ENCODE measurements at regions of chr15 and their contacts with region 1.

Region 1: GRCh38 chr15:57611938-57612337 is 20.2 kb downstream of the MYZAP start:
- DNase-seq: peak; percentile 55 to 83 (median 79)
- H3K4me3 ChIP-seq: no peak overlapping the region
- H3K27ac ChIP-seq: peak overlapping the region in 4 of 5 donors; percentile 49 to 90 (median 82)
- H3K4me1 ChIP-seq: peaks cover 27 to 56% of the 10 kb centered on the region in 2 donors
- H3K27me3 ChIP-seq: no peaks in the 10 kb centered on the region
- CTCF ChIP-seq: peak in 5 of 6 experiments; percentile 46 to 69 (median 61)
- POLR2A ChIP-seq: no peak

Region 2: DNA sequence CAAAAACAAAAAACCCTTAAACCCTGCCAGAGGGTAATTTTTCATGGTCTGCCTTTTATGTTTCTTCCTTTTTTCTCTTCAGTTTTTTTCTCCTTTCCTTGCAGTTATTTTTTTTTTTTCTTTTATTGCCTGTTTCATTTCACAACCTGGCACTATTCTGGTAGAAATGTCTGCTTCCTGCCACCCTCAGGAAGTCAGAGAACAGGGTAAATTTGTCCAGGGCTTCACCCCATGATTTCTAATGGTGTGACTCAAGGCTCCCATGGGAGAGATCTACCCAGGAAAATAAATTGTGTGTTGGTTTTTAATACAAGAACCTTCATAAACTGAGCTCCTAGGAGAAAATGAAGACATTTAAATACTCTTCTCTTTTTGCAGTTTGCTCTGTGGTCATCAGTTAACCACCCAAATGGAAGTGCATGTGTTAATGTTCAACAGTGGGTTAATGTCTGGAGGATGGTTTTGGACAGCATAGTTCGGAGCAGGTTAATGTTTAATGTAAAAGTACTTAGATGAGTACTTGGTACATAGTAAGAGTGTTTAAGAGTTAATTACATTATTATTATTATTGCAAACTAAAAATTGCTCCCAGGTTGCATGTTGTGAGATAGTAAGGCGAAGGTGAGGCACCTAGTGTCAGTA is 189.7 kb before region 1 on chr15:
- intact Hi-C with region 1: no loop called
- DNase-seq: no peak
- H3K4me3 ChIP-seq: no peak overlapping the region
- H3K27ac ChIP-seq: no peak overlapping the region
- H3K4me1 ChIP-seq: peaks cover 0 to 8% of the 10 kb centered on the region in 2 donors
- H3K27me3 ChIP-seq: no peaks in the 10 kb centered on the region
- CTCF ChIP-seq: no peak
- POLR2A ChIP-seq: no peak

Region 3: DNA sequence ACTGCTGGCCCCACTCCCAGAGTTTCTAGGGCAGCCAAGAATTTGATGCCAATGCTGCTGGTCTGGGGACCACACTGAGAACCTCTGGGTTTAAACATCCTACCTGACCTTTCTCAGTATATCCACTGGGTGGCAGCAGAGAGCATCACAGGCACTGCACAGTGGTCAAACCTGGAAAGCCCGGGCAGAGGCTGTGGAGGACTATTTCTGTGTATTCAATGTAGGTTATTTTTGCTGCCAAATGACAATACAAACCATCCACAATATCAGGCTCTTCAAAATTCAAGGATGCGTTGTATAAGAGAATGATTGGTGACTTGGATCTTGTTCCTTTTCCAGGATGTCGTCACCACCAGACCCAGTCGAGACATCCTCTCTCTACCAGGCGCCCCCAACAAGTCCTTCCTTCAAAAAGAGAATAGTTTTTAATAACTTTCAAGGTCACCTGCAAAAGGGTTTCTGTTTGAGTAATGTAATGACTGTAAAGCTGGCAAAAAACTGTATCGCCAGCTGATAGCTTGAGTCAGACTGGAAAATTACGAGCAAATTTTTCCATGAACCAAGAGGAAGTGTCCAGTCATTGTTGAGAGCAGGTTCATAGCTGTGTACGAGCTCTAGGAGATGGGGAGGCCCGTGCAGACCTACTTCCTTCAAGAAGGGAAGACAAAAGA is 50.8 kb before region 1 on chr15:
- intact Hi-C with region 1: loop called in 1 of 2 experiments (anchors 5 kb)
- DNase-seq: peak; percentile 87 to 94 (median 90)
- H3K4me3 ChIP-seq: no peak overlapping the region
- H3K27ac ChIP-seq: peak overlapping the region; percentile 61 to 88 (median 83)
- H3K4me1 ChIP-seq: peaks cover 3 to 24% of the 10 kb centered on the region in 2 donors
- H3K27me3 ChIP-seq: no peaks in the 10 kb centered on the region
- CTCF ChIP-seq: peak; percentile 93 to 96 (median 94)
- POLR2A ChIP-seq: peak in 1 of 2 donors; percentile 61

Region 4: GRCh38 chr15:57969354-57969753 is 357.4 kb after region 1 on chr15:
- intact Hi-C with region 1: no loop called
- DNase-seq: no peak
- H3K4me3 ChIP-seq: no peak overlapping the region
- H3K27ac ChIP-seq: no peak overlapping the region
- H3K4me1 ChIP-seq: no peaks in the 10 kb centered on the region
- H3K27me3 ChIP-seq: no peaks in the 10 kb centered on the region
- CTCF ChIP-seq: no peak
- POLR2A ChIP-seq: no peak

Measured in adrenal gland (tissue), 19 donors.